GM10248 (cell line): ENCODE measurements at regions of chr2 and their contacts with region 1.

Region 1: DNA sequence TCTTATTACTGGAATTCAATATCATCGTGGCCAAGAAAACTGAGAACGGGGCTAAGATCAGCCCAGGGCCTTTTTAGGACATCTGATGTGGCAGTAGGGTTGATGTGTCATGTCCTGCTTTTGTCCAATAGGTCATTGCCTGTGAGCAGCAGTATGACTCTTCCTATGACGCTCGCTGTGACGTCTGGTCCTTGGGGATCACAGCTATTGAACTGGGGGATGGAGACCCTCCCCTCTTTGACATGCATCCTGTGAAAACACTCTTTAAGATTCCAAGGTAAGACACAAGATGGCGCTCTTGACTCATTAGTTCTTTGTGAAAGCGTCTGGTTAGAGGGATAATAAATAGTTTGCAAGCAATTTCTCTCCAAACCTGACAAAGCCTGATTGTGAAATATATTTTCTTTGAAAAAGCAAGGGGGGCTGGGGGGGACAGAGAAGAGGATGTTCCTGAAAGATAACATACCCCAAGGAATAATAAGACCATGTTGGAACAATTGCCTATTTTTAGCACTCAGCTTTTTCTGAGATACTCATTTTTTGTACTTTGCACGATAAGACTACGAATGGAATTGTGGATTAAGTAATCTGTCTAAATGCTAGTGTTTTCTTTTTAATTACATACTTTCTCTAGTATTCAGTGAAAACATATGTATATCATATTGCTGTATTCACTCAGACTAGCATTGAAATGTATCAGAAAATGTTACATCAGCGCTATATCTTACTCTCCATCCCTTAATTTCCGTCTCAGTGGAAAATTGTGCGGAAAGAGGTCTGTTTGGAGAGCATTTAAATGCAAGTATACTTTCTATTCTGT is 58.1 kb downstream of the MYO3B start:
- DNase-seq: peak; percentile 45
- CTCF ChIP-seq: peak; percentile 44

Region 2: DNA sequence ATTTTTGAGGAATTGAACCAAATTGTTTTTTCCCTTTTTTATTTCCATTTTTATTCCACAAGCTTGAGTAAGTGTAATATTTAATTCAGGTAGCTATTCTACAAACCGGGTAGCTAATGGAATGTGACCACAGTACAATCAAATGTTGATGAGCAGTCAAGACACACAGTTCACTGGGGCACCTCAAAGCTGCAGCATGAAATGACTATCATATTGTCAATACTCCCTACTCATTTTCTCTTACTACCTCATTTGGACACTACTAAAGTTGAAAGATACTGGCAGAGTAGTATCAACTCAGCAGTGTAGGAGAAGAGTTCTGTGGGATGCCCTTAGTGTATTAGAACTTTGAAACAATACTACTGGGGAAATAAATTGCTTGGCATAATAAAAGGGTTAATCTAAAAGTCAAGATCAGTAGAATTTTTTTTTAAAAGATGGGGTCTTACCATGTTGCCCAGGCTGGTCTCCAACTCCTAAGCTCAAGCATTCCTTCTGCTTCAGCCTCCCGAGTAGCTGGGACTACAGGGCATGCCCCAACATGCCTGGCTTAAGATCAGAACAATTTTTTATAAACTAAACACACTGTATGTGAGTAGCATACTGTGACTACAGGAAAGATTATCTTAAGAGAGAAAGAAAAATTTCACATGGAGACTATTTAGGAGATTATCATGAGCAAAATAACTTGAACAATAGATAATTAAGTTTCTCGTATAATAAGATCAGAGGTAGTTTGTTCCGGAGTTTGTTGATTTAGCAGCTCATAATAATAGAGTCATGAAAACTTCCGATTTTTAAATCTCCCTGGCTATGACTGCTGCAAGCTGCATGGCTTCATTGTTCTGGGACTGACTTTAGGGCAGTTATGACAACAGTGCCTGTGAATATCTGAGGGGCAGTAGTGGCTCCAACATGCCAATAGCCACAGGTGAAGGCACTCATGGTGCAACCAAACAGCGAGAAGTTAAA is 14.5 kb before region 1 on chr2:
- CTCF ChIA-PET with region 1: interaction called, 11 read pairs
- POLR2A ChIA-PET with region 1: no interaction called
- DNase-seq: no peak
- CTCF ChIP-seq: no peak

Region 3: GRCh38 chr2:170815746-170816503 is 579.9 kb after region 1 on chr2:
- CTCF ChIA-PET with region 1: interaction called, 14 read pairs
- POLR2A ChIA-PET with region 1: no interaction called
- DNase-seq: peak; percentile 80
- CTCF ChIP-seq: peak; percentile 70